ENCODE measurements at regions of chr10 and their contacts with region 1.

Region 1: DNA sequence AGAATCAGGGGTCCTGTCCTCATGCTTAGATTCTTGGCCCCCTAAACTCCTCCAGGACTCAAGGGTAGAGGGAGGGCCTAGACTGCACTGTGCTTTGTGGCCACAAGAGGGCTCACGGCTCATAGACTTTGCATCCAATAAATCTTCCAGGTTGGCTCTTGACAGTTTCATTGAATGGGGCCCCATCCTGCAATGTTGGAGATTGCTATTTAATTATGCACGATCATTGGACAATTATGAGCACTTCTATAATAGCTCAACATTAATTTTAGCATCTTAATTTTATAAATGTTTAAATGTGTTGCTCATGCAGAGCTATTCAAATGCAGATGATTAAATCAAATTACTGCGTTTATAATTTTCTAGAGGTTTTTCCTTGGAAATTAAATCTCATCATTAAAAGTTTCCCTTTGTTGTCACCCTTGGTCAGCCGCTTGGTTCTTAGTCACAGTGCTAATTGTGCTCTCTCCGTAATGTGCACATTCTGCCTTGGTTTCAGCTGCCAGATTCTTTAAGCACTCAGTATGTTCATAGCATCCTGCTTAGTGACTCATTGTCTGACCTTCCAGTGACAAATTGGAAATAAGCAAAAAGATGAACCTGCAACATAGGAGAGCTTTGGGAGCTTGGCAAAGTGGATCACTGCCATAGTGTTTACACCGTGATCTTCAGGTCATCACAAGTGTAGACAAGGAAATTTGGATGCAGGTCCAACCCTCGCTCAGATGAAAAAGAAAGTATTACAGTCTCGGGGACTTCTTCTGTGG is 33.4 kb upstream of the PLPP4 start:
- DNase-seq: no peak
- H3K4me3 ChIP-seq: peak overlapping the region; percentile 24
- CTCF ChIP-seq: peak; percentile 87

Region 2: GRCh38 chr10:120286280-120286679 is 137.3 kb before region 1 on chr10:
- CTCF ChIA-PET with region 1: no interaction called
- POLR2A ChIA-PET with region 1: no interaction called
- DNase-seq: no peak
- H3K4me3 ChIP-seq: no peak overlapping the region
- CTCF ChIP-seq: no peak

Region 3: GRCh38 chr10:120387326-120387725 is 36.3 kb before region 1 on chr10:
- CTCF ChIA-PET with region 1: interaction called, 15 read pairs
- POLR2A ChIA-PET with region 1: no interaction called
- DNase-seq: peak; percentile 34
- H3K4me3 ChIP-seq: no peak overlapping the region
- CTCF ChIP-seq: no peak

Region 4: GRCh38 chr10:120409816-120410215 is 13.8 kb before region 1 on chr10:
- CTCF ChIA-PET with region 1: interaction called, 38 read pairs
- POLR2A ChIA-PET with region 1: interaction called, 3 read pairs
- DNase-seq: no peak
- H3K4me3 ChIP-seq: no peak overlapping the region
- CTCF ChIP-seq: no peak

Region 5: GRCh38 chr10:120508393-120508792 is 84.8 kb after region 1 on chr10:
- CTCF ChIA-PET with region 1: interaction called, 13 read pairs
- POLR2A ChIA-PET with region 1: no interaction called
- DNase-seq: peak; percentile 59
- H3K4me3 ChIP-seq: no peak overlapping the region
- CTCF ChIP-seq: no peak

Region 6: GRCh38 chr10:120607016-120607709 is 183.5 kb after region 1 on chr10:
- CTCF ChIA-PET with region 1: interaction called, 12 read pairs
- POLR2A ChIA-PET with region 1: no interaction called
- DNase-seq: peak; percentile 90
- H3K4me3 ChIP-seq: no peak overlapping the region
- CTCF ChIP-seq: no peak

Measured in AG04449 (cell line).